ENCODE measurements at regions of chr19 and their contacts with region 1.

Region 1: DNA sequence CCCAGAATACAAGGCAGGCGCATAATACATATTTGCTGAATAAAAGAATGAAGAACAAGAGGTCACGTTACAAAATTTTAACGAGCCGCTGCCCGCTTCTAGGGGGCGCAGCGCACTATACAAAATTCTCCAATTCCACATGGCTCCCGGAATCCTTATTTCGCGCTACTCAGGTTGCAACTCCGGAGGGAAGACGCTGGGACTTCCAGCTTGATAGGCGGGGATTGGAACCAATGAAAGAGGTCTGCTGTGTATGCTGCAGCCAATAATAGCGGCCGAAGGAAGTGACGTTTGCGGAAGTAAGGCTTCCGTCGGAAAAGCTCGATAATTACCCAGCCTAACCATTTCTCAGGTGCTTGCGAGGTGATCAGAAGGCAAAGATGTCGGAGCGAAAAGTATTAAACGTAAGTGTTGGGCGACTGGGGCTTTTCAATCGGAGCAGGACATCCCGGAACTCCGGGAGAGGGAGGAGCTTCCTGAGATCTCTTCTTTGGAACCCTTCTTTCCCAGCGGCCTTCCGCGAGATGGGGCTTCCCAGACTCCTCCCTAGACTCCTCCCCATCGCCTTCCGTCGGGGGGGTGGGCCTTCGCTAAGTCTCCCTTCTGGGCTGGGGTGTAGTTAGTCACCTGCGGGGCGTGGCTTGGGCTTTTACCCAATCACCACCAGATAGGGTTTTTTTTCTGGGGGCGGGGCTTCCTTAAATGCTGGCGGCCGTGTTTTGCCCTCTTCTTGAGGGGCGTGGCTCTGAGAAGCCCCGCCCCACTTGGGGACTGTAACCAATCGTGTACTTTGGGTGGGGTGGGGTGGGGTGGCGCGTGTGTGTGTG is at the start of gene YJU2:
- DNase-seq: peak; percentile 100
- ATAC-seq: peak; percentile 97
- H3K4me3 Mint-ChIP-seq: peak within 1 kb of the TSS; percentile 84
- H3K27ac Mint-ChIP-seq: peak within 1 kb of the TSS; percentile 100
- H3K4me1 Mint-ChIP-seq: peaks cover 9% of the 10 kb centered on the region
- H3K27me3 Mint-ChIP-seq: no peaks in the 10 kb centered on the region
- total RNA-seq, gene YJU2: 29.8 to 34.8 TPM

Region 2: DNA sequence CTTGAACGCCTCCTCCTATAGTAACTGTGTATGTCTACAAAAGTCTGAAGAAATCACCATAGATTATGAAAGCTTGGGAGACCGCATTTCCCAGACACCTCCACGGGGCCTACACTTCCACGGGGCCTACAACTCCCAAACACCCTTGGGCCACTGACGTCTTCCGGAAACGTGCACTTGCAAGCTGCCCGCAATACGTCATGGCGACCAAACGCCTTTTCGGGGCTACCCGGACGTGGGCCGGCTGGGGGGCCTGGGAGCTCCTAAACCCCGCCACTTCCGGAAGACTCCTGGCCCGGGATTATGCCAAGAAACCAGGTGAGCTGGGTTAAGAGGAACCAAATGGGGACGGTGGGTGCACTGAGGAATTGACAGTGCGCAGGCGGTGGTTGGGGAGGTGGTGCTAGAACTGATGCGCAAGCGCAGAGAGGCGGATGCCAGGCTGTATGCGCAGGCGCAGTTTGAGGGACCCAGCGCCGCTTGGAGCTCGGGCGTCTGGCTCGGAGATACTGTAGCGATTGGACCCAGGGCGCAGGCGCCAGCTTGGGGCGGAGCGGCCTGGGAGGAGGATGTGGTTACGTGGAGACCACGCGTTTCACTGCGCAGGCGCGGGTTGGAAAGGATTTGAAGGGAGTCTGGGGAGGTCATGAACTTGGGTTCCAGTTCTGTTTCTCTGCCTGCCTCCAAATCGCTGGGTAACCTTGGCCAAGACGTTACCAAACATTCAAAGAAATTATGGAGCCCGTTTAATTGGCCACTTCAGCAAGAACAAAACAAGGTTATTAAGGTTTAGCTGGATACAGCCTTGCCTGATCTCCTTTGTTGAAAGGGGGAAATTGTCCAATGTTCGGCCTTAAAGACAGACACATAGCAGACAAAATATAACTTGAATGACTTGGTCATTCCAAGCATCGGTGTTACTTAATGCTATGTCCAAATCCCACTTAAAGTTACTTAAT is 484.2 kb before region 1 on chr19 and contains the start of gene MRPL54:
- CTCF ChIA-PET with region 1: interaction called, 3 read pairs
- POLR2A ChIA-PET with region 1: no interaction called
- intact Hi-C with region 1: loop called (anchors 1 to 5 kb)
- DNase-seq: peak; percentile 100
- ATAC-seq: peak; percentile 88
- H3K4me3 Mint-ChIP-seq: peak within 1 kb of the TSS; percentile 100
- H3K27ac Mint-ChIP-seq: peak within 1 kb of the TSS; percentile 99
- H3K4me1 Mint-ChIP-seq: peaks cover 39% of the 10 kb centered on the region
- H3K27me3 Mint-ChIP-seq: no peaks in the 10 kb centered on the region
- total RNA-seq, gene MRPL54: 54.8 to 63.9 TPM

Region 3: DNA sequence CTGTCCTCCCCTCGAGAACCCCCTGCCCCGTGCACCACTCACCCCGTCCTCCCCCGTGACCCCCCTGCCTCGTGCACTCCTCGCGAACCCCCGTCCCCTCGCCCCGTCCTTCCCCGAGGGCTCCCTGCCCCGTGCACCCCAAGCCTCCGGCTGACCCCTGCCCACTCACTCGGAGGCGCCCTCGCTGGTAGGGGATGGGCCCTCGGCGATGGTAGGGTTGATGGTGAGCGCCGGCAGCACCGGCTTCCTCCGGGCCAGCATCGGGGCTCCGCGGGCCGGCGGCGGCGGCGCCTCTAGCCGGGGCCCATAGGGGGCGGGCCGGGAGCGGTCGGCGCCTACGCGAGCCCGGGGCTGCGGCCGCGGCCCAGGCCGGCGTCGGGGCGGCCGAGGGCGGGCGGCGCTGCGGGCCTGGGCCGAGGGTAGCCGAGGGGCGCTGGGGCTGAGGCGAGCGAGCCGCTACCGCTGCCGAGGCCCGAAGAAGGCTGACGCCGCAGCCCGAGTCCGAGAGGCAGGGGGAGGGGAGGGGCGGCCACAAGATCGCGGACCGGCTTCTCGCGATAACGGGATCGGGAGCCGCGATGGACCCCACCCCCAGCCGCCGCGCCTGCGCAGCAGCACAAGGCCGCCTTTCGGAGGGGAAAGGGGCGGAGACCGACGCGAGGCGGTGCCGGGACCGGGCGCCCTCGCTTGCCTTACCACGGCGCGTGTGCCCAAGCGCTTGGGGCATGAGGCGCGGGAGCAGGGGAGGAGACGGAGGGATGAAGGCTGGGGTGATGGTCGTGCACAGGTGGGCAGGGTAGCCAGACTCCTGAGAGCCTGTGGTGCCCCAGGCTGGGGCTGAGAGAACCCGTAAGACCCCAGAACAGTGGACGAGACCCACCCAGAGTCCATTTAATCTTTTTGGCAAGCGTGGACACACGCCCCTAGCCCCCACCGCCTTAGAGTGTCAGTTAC is 123.1 kb before region 1 on chr19 and contains the start of gene MAP2K2:
- CTCF ChIA-PET with region 1: no interaction called
- POLR2A ChIA-PET with region 1: no interaction called
- intact Hi-C with region 1: loop called in 1 of 2 experiments (anchors 1 kb)
- DNase-seq: peak; percentile 98
- ATAC-seq: peak; percentile 96
- H3K4me3 Mint-ChIP-seq: peak within 1 kb of the TSS; percentile 97
- H3K27ac Mint-ChIP-seq: peak within 1 kb of the TSS; percentile 92
- H3K4me1 Mint-ChIP-seq: peaks cover 18% of the 10 kb centered on the region
- H3K27me3 Mint-ChIP-seq: no peaks in the 10 kb centered on the region
- total RNA-seq, gene MAP2K2: 108 to 133 TPM

Region 4: GRCh38 chr19:4215807-4216370 is 31.1 kb before region 1 on chr19:
- CTCF ChIA-PET with region 1: no interaction called
- POLR2A ChIA-PET with region 1: no interaction called
- intact Hi-C with region 1: no loop called
- DNase-seq: no peak
- ATAC-seq: no peak
- H3K4me3 Mint-ChIP-seq: no peak overlapping the region
- H3K27ac Mint-ChIP-seq: no peak overlapping the region
- H3K4me1 Mint-ChIP-seq: peaks cover 2% of the 10 kb centered on the region
- H3K27me3 Mint-ChIP-seq: no peaks in the 10 kb centered on the region

Region 5: DNA sequence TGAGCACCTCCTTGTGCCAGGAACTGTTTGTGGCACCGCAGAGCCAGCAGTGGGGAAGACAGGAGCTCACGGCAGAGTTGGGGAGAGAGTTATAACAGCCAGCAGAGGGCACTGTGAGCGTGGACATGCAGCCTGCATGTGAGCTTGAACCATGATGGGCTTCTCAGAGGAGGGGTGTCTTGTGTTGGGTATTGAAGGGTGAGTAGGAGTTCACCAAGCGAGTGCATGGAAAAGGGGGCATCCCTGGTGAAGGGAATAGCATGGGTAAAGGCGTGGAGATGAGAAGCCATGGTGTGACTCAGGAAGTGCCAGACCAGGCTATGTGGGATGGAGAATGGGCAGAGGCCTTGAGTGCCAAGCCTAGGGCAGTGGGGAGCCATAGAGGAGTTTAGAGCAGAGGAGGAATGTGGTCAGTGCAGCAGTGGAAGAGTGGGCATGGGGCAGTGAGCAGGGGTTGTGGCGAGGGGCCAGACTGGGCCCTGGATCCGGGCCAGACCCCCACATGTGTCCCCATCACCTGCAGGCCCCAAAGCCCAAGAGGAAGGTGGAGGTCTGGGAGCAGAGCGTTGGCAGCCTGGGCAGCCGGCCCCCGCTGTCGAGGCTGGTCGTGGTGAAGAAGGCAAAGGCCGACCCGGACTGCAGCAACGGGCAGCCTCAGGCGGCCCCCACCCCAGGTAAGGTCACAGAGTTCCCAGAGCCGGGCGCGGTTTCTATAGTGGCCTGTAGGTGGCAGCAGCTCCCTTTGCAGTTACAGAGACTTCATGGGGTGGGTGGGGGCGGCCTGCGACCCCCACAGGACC is 20.3 kb after region 1 on chr19:
- CTCF ChIA-PET with region 1: interaction called, 11 read pairs
- POLR2A ChIA-PET with region 1: interaction called, 6 read pairs
- intact Hi-C with region 1: no loop called
- DNase-seq: peak; percentile 83
- ATAC-seq: peak; percentile 81
- H3K4me3 Mint-ChIP-seq: no peak overlapping the region
- H3K27ac Mint-ChIP-seq: peak overlapping the region; percentile 9
- H3K4me1 Mint-ChIP-seq: peaks cover 14% of the 10 kb centered on the region
- H3K27me3 Mint-ChIP-seq: no peaks in the 10 kb centered on the region

Region 6: DNA sequence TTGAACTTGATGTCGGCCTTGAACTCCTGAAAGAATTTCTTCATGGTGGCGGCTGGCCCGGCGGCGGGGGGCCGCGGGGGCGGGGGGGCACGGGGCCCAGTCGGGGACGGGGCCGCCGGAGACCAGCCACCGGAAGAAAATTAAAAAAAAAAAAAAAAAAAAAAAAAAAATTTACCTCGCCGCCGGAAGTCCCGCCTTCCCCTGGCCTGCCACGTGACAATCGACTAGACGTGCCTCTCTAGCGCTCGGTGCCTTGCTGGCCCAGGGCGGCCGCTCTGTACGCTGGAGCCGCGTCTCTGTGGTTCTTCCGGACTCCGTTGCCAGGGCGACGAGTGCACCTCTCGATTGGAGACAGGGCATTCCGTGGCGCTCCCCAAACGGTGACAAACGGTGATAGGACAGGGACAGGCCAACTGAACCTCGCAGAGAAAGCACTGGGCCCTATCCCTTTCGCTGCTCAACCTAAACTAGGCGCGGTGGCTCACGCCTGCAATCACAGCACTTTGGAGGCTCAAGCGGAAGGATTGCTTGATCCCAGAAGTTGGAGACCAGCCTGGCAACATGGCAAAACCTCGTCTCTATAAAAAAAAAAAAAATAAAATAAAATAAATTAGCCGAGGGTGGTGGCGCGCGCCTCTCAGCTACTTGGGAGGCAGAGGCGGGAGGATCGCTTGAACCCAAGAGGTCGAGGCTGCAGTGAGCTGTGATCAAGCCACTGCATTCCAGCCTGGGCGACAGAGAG is 210.8 kb after region 1 on chr19 and contains the start of gene UBXN6:
- CTCF ChIA-PET with region 1: no interaction called
- POLR2A ChIA-PET with region 1: no interaction called
- intact Hi-C with region 1: loop called in 1 of 2 experiments (anchors 1 kb)
- DNase-seq: peak; percentile 99
- ATAC-seq: peak; percentile 93
- H3K4me3 Mint-ChIP-seq: peak within 1 kb of the TSS; percentile 86
- H3K27ac Mint-ChIP-seq: peak within 1 kb of the TSS; percentile 86
- H3K4me1 Mint-ChIP-seq: peaks cover 19% of the 10 kb centered on the region
- H3K27me3 Mint-ChIP-seq: no peaks in the 10 kb centered on the region
- total RNA-seq, gene UBXN6: 32.9 to 38.4 TPM

Measured in activated CD4-positive, alpha-beta T cell treated with anti-CD3 and anti-CD28 coated beads for 36 hours (primary cell).